Activated T-helper 1 cell treated with anti-CD3 and anti-CD28 coated beads, Interleukin-12 subunit alpha, Interleukin-12 subunit beta, Interleukin-2, Interleukin-4 antibody, amounts not matched to agents 30 ng/mL and 10 ng/mL and 1 ng/mL, durations not matched to agents 14 hours and 24 hours and 36 hours (primary cell): ENCODE measurements at regions of chr12 and their contacts with region 1.

Region 1: DNA sequence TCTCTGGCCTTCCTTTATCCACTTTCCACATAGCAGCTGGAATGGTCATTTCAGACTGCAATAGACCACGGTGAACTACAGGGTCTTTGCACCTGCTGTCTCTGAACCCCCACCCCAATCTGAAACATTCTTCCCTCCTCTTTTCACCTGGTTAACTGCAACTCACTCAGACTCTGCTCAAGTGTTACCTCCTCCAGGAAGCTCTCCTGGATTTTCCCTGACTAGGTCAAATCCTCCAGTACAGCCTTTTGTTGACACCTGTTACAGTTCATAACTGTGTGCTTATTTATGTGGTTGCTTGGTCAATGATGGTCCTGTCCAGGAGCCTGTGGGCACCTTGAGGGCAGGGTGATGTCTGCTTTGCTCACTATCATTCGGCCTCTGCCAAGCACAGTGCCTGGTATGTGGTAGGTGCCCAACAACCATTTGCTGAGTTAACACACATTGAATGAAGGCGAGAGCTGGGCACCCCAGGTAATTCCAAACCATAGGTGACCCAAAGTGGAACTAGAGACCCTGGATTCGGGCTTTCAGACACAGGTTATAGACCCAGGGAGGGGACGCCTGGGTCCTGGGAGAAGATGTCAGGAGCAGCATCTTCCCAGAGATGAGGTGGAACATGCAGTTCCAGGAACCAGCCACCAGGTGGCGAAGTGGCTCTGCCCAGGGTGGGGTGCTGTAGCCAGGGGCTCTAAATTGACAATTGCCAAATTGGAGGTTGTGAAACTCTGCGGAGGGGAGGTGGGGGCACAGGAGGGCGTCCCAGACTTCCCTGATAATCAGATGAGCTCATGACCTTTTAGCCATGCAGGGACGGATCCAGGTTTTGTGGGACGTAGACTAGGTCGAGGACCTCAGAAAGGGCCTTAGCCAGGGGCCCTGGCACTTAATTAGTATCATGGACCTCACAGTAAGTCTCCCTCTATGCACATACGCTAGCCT is 28.1 kb downstream of the TRPV4 start:
- DNase-seq: peak; percentile 48
- H3K4me3 Mint-ChIP-seq: no peak overlapping the region
- H3K27ac Mint-ChIP-seq: no peak overlapping the region
- H3K4me1 Mint-ChIP-seq: no peaks in the 10 kb centered on the region
- H3K27me3 Mint-ChIP-seq: peaks cover 2% of the 10 kb centered on the region

Region 2: GRCh38 chr12:109844983-109845823 is 40.1 kb after region 1 on chr12:
- intact Hi-C with region 1: loop called (anchors 1 kb)
- DNase-seq: peak; percentile 85
- H3K4me3 Mint-ChIP-seq: peak overlapping the region; percentile 37
- H3K27ac Mint-ChIP-seq: no peak overlapping the region
- H3K4me1 Mint-ChIP-seq: peaks cover 5% of the 10 kb centered on the region
- H3K27me3 Mint-ChIP-seq: no peaks in the 10 kb centered on the region

Region 3: GRCh38 chr12:109899783-109900751 is 95.0 kb after region 1 on chr12 and contains the start of gene TCHP:
- intact Hi-C with region 1: no loop called
- DNase-seq: peak; percentile 69
- H3K4me3 Mint-ChIP-seq: peak within 1 kb of the TSS; percentile 95
- H3K27ac Mint-ChIP-seq: peak within 1 kb of the TSS; percentile 94
- H3K4me1 Mint-ChIP-seq: peaks cover 19% of the 10 kb centered on the region
- H3K27me3 Mint-ChIP-seq: no peaks in the 10 kb centered on the region
- total RNA-seq, gene TCHP: 30.4 and 31.1 TPM in 2 replicates

Region 4: GRCh38 chr12:109927622-109928021 is 122.5 kb after region 1 on chr12:
- intact Hi-C with region 1: loop called (anchors 1 kb)
- DNase-seq: peak; percentile 10
- H3K4me3 Mint-ChIP-seq: no peak overlapping the region
- H3K27ac Mint-ChIP-seq: peak overlapping the region; percentile 42
- H3K4me1 Mint-ChIP-seq: no peaks in the 10 kb centered on the region
- H3K27me3 Mint-ChIP-seq: no peaks in the 10 kb centered on the region

Region 5: GRCh38 chr12:110015132-110015531 is 210.0 kb after region 1 on chr12:
- intact Hi-C with region 1: loop called (anchors 1 kb)
- DNase-seq: no peak
- H3K4me3 Mint-ChIP-seq: peak overlapping the region; percentile 53
- H3K27ac Mint-ChIP-seq: peak overlapping the region; percentile 90
- H3K4me1 Mint-ChIP-seq: peaks cover 44% of the 10 kb centered on the region
- H3K27me3 Mint-ChIP-seq: no peaks in the 10 kb centered on the region